IMR-90 (cell line): ENCODE measurements at regions of chr1 and their contacts with region 1.

Region 1: GRCh38 chr1:6343506-6344405 is 49.8 kb downstream of the ACOT7 start:
- DNase-seq: peak; percentile 72
- ATAC-seq: peak; percentile 100
- H3K4me3 ChIP-seq: no peak overlapping the region
- H3K27ac ChIP-seq: no peak overlapping the region
- H3K4me1 ChIP-seq: no peaks in the 10 kb centered on the region; the same call in 1 of the 2 replicates
- H3K27me3 ChIP-seq: no peaks in the 10 kb centered on the region
- CTCF ChIP-seq: peak; percentile 97
- POLR2A ChIP-seq: no peak
- RAD21 ChIP-seq: peak; percentile 98

Region 2: DNA sequence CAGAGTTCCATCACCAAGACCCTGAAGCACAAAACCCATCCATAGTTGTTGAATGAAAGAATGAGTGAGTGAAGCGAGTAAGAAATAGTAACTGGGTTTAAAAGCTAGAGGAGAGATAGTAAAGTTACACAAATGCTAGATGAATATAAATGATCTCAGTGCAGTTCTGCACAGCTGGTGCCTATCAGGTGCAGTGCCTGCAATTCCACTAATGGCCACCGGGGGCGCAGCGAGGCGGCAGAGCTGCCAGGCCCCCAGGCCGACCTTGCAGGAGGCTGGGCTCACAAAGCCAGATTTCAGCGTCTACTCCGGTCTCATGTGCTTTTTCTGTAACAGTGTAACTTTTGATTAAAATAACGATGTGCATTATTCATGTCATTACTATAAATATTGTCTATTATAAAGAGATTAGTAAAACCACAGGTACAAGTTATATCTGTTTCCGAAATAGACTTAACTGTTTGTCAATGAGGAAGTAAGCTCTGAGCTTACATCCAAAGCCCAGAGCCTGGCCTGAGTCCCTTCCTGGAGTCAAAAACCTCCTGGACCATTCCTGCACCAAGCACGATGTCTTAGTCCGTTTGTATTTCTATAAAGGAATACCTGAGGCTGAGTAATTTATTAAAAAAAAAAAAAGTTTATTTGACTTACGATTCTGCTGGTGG is 829.1 kb before region 1 on chr1:
- CTCF ChIA-PET with region 1: no interaction called
- POLR2A ChIA-PET with region 1: no interaction called
- dilution Hi-C with region 1: no loop called
- in situ Hi-C with region 1: loop called (anchors 25 kb)
- intact Hi-C with region 1: no loop called
- DNase-seq: peak; percentile 7
- ATAC-seq: peak; percentile 87
- H3K4me3 ChIP-seq: no peak overlapping the region
- H3K27ac ChIP-seq: no peak overlapping the region
- H3K4me1 ChIP-seq: no peaks in the 10 kb centered on the region
- H3K27me3 ChIP-seq: no peaks in the 10 kb centered on the region
- CTCF ChIP-seq: peak; percentile 75
- POLR2A ChIP-seq: no peak
- RAD21 ChIP-seq: peak; percentile 36; the same call in 1 of the 2 replicates

Region 3: DNA sequence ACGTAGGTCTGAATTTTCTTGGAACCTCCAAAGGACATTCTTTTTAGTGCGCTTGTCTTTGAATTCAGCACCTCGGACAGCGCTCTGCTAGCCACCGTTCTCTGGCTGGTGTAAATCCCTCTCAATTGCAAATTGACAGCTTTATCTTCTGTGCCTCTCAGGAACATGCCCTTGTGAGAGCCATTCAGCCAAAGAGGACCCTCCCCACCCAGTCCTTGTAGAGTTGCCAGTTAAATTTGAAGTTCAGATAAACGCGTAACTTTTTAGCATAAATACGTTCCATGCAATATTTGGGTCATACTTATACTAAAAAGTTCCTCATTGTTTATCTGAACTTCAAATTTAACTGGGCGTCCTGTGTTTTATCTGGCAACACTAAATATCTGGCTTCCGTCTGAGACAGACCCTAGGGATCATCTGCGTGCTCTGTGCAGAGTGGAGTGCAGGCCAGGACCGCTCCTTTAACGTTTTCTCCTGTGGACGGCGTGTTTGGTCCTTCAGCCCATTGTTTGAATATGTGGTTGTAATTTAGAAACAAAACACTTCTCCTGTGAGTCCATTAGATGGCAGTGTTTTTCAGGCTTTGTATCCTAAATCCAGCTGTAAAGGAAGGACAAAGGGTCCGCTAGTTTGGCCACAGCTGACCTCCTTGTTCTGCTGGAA is 291.1 kb before region 1 on chr1:
- CTCF ChIA-PET with region 1: no interaction called
- POLR2A ChIA-PET with region 1: no interaction called
- dilution Hi-C with region 1: no loop called
- in situ Hi-C with region 1: no loop called
- intact Hi-C with region 1: loop called (anchors 1 kb)
- DNase-seq: peak; percentile 68
- ATAC-seq: peak; percentile 83
- H3K4me3 ChIP-seq: no peak overlapping the region
- H3K27ac ChIP-seq: no peak overlapping the region
- H3K4me1 ChIP-seq: no peaks in the 10 kb centered on the region
- H3K27me3 ChIP-seq: peaks cover 6% of the 10 kb centered on the region; the same call in 1 of the 2 replicates
- CTCF ChIP-seq: peak; percentile 60
- POLR2A ChIP-seq: no peak
- RAD21 ChIP-seq: peak; percentile 72

Region 4: DNA sequence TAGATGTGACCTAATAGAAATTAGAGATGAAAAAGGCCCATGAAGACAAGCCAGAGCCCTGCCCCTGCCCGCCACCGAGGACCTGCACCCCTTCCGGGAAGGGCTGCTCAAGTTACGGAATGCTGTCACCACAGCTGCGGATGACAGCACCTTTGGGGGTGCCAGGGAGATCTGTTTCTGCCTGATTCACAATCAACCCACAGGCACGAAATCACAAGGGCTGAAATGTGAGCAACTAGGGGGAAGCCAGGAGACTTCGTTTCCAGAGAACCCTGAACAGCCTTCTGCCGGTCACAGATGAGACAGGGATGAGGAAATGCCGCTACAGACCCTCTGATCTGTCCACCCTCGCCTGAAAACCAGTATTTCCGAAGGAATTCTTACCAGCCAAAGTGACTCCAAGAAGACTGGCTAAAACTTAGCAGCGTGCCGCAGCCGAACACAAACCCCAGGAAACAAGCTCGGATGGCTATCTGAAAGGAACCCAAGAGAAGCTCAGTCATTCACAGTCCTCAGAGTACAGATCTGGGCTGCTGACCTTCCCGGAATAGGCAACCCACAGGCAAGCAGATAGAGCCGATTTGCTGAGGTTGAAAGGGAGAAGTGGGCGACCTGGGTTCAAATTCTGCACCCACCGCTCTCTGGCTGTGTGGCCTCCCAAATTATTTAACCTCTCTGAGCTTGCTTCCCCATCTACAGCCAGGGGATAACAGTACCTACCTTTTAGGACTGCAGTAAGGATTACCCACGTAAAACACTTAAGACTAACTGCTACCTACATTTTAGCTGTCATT is 109.1 kb before region 1 on chr1:
- CTCF ChIA-PET with region 1: no interaction called
- POLR2A ChIA-PET with region 1: no interaction called
- dilution Hi-C with region 1: no loop called
- in situ Hi-C with region 1: no loop called
- intact Hi-C with region 1: no loop called
- DNase-seq: peak; percentile 45
- ATAC-seq: peak; percentile 5; the same call in 1 of the 2 replicates
- H3K4me3 ChIP-seq: peak overlapping the region; percentile 98
- H3K27ac ChIP-seq: peak overlapping the region; percentile 7; the same call in 1 of the 2 replicates
- H3K4me1 ChIP-seq: peaks cover 4% of the 10 kb centered on the region; the same call in 1 of the 2 replicates
- H3K27me3 ChIP-seq: peaks cover 9% of the 10 kb centered on the region
- CTCF ChIP-seq: no peak
- POLR2A ChIP-seq: no peak
- RAD21 ChIP-seq: no peak

Region 5: DNA sequence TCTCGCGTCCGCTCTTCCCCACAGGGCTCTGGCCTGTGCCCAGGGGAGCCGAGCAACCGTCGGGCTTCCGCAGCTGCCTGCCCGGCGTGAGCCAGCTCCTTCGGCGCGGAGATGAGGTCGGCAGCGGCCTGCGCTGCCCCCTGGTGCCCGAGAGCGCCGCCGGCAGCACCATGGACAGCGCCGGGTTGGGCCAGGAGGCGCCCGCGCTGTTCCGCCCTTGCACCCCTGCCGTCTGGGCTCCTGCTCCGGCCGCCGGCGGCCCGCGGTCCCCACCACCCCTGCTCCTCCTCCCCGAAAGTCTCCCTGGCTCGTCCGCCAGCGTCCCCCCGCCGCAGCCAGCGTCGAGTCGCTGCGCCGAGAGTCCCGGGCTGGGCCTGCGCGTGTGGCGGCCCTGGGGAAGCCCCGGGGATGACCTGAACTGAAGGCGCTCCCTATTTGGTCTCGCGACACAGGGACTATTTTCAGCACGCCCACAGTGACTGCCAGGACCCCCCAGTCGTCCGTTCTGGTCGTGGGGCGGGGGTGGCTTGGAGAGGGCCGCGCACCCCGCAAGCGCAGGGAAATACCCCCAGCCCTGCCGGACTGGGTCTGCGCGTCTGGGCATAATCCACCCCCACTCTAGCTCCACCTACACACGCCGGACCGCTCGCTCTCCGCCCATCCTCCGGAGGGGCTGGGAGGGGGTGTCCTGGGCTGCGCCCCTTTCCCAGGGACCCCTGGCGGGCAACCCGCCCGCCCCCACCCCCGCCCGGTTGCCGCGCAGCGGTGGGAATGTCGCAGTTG is 98.5 kb before region 1 on chr1:
- CTCF ChIA-PET with region 1: interaction called, 6 read pairs
- POLR2A ChIA-PET with region 1: no interaction called
- dilution Hi-C with region 1: no loop called
- in situ Hi-C with region 1: loop called (anchors 5 kb)
- intact Hi-C with region 1: loop called (anchors 1 kb)
- DNase-seq: peak; percentile 71
- ATAC-seq: peak; percentile 84
- H3K4me3 ChIP-seq: no peak overlapping the region
- H3K27ac ChIP-seq: no peak overlapping the region
- H3K4me1 ChIP-seq: no peaks in the 10 kb centered on the region
- H3K27me3 ChIP-seq: peaks cover 71% of the 10 kb centered on the region
- CTCF ChIP-seq: peak; percentile 95
- POLR2A ChIP-seq: no peak
- RAD21 ChIP-seq: peak; percentile 83

Region 6: DNA sequence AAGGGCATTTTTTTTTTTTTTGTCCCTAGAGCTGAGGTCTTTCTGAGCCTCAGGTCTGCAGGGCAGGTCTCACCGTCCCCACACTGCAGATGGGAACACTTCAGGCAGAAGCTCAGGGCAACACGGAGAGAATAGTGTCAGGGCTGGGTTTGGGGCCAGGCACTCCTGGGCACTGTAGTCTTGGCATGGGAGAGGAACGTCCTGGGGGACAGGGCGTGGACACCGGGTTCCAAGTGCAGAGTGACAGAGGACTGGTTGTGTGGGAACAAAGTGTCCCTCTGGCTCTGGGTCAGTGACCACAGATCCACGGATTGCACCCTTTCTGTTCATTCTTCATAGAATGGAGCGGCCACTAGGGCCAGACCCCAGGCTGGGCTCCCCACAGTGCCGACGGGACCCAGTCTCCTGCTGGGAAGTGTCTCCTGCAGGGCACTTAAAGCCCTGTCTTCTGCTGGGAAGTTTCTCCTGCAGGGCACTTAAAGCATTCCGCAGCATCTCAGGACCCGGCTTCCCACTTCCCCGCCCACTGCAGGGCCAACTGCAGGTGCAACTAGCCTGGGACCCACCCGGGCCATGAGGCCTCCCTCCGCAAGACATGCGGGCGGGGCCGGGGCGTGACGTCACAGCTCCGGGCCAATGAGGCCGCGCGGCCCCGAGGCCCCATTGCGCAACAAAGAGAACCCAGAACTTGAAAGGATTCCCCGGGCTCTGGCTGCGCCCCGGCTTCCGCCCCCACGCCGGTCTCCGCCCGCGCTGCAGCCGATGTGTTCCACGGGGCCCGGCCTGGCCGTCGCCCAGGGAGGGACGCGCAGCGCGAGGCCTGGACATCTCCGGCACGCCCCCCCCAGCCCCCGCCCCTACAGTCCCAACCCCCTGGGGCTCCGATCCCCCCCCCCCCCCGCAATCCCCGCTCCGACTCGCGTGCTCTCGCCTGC is 84.0 kb before region 1 on chr1:
- CTCF ChIA-PET with region 1: no interaction called
- POLR2A ChIA-PET with region 1: no interaction called
- dilution Hi-C with region 1: no loop called
- in situ Hi-C with region 1: no loop called
- intact Hi-C with region 1: loop called (anchors 1 kb)
- DNase-seq: peak; percentile 72
- ATAC-seq: peak; percentile 61
- H3K4me3 ChIP-seq: peak overlapping the region; percentile 75
- H3K27ac ChIP-seq: no peak overlapping the region
- H3K4me1 ChIP-seq: peaks cover 2% of the 10 kb centered on the region; the same call in 1 of the 2 replicates
- H3K27me3 ChIP-seq: no peaks in the 10 kb centered on the region
- CTCF ChIP-seq: no peak
- POLR2A ChIP-seq: no peak
- RAD21 ChIP-seq: no peak

Region 7: DNA sequence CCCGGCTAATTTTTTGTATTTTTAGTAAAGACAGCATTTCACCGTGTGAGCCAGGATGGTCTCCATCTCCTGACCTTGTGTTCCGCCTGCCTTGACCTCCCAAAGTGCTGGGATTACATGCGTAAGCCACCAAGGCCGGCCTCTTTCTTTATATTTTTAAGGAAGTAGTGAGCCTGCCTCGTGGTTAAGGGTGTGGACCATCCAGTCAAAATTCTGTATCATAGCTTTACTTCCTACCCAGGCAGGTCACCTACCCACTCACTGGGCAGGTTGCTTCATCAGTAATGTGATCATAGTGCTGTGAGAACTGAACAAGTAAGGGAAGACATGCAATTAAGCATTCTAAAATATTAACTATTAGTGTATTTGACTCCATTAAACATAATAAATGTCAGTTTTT is 57.9 kb after region 1 on chr1:
- CTCF ChIA-PET with region 1: no interaction called
- POLR2A ChIA-PET with region 1: no interaction called
- dilution Hi-C with region 1: no loop called
- in situ Hi-C with region 1: no loop called
- intact Hi-C with region 1: loop called (anchors 1 kb)
- DNase-seq: no peak
- ATAC-seq: no peak
- H3K4me3 ChIP-seq: no peak overlapping the region
- H3K27ac ChIP-seq: no peak overlapping the region
- H3K4me1 ChIP-seq: no peaks in the 10 kb centered on the region
- H3K27me3 ChIP-seq: peaks cover 9% of the 10 kb centered on the region
- CTCF ChIP-seq: no peak
- POLR2A ChIP-seq: no peak
- RAD21 ChIP-seq: no peak

Region 8: DNA sequence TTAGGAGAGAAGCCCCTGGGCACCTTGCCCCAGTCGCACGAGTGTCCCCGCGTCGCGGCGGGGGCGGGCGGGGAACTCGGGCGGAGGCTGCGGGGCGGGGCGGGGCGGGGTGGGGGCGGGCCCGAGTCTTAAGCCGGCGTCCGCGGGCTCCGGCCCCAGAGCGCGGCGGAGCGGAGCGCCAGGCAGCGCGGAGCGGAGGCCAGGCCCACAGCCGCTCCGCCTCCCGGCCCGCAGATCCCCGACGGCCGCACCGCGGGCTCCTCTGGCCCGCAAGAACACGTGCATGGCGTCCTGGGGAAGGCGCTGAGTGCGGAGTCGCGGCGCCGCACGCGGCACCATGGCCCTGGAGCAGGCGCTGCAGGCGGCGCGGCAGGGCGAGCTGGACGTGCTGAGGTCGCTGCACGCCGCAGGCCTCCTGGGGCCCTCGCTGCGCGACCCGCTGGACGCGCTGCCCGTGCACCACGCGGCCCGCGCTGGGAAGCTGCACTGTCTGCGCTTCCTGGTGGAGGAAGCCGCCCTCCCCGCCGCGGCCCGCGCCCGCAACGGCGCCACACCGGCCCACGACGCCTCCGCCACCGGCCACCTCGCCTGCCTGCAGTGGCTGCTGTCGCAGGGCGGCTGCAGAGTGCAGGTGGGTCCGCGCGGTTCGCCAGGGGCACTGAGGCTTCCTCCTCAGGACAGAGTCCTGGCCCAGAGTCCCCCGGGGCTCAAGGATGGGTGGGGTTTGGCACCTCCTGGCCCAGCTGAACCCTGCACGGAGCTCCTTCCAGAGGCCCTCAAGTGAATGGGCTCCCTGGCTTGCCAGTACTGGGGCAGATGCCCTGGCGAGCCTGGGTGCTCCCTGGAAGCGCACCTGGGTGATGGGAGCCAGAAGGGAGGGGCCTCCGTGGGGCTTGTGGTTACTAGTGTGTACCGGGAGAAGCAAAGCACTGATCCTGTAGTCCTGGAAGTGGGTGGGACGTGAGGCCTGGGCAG is 81.2 kb after region 1 on chr1 and contains the start of gene ESPN:
- CTCF ChIA-PET with region 1: no interaction called
- POLR2A ChIA-PET with region 1: no interaction called
- dilution Hi-C with region 1: no loop called
- in situ Hi-C with region 1: no loop called
- intact Hi-C with region 1: no loop called
- DNase-seq: no peak
- ATAC-seq: peak; percentile 42
- H3K4me3 ChIP-seq: no peak within 1 kb of the TSS; the same call in 1 of the 2 replicates
- H3K27ac ChIP-seq: no peak within 1 kb of the TSS
- H3K4me1 ChIP-seq: no peaks in the 10 kb centered on the region; the same call in 1 of the 2 replicates
- H3K27me3 ChIP-seq: peaks cover 84% of the 10 kb centered on the region
- CTCF ChIP-seq: no peak
- POLR2A ChIP-seq: no peak
- RAD21 ChIP-seq: no peak
- total RNA-seq, gene ESPN: under 0.01 TPM in 1 of 2 replicates, not detected in the other

Region 9: DNA sequence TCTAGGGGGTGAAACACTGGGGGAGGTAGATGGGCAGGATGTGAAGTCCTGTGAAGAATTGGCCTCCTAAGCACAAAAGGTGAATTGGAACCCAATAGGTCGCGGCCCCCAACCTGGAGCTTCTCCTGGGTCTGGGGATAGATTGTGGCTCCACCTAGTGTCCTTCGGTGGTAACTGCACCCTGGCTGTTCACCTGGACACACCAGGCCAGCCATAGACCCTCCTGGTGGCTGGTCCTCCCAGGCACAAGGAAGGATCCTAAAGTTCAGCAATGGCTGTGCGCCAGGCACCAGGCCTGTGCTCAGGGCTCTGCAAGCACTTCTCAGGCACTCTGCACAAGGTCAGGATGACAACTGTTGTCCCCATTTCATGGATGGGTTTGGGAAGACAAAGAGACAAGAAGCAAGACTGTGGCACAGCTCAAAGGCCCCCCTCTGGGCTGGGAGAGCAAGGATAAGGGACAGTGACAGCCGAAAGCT is 94.3 kb after region 1 on chr1:
- CTCF ChIA-PET with region 1: no interaction called
- POLR2A ChIA-PET with region 1: no interaction called
- dilution Hi-C with region 1: no loop called
- in situ Hi-C with region 1: no loop called
- intact Hi-C with region 1: loop called (anchors 5 kb)
- DNase-seq: peak; percentile 33
- ATAC-seq: peak; percentile 80
- H3K4me3 ChIP-seq: no peak overlapping the region
- H3K27ac ChIP-seq: no peak overlapping the region
- H3K4me1 ChIP-seq: peaks cover 1% of the 10 kb centered on the region; the same call in 1 of the 2 replicates
- H3K27me3 ChIP-seq: peaks cover 42% of the 10 kb centered on the region
- CTCF ChIP-seq: peak; percentile 71
- POLR2A ChIP-seq: no peak
- RAD21 ChIP-seq: peak; percentile 59